Activated CD8-positive, alpha-beta memory T cell treated with anti-CD3 and anti-CD28 coated beads, Interleukin-2, amount 10 ng/mL, durations not matched to agents 7 days and 5 days (primary cell): ENCODE measurements at regions of chr6 and their contacts with region 1.

Region 1: GRCh38 chr6:11496152-11497060 is 41.1 kb upstream of the TMEM170B start:
- DNase-seq: peak; percentile 84
- ATAC-seq: peak; percentile 93
- H3K4me3 Mint-ChIP-seq: no peak overlapping the region
- H3K27ac Mint-ChIP-seq: peak overlapping the region; percentile 6
- H3K4me1 Mint-ChIP-seq: peaks cover 13% of the 10 kb centered on the region
- H3K27me3 Mint-ChIP-seq: no peaks in the 10 kb centered on the region

Region 2: GRCh38 chr6:11144393-11144851 is 352.0 kb before region 1 on chr6:
- CTCF ChIA-PET with region 1: interaction called, 111 read pairs
- DNase-seq: peak; percentile 88
- ATAC-seq: peak; percentile 97
- H3K4me3 Mint-ChIP-seq: no peak overlapping the region
- H3K27ac Mint-ChIP-seq: peak overlapping the region; percentile 13
- H3K4me1 Mint-ChIP-seq: peaks cover 5% of the 10 kb centered on the region
- H3K27me3 Mint-ChIP-seq: no peaks in the 10 kb centered on the region

Region 3: GRCh38 chr6:11224252-11224965 is 272.0 kb before region 1 on chr6:
- CTCF ChIA-PET with region 1: interaction called, 37 read pairs
- DNase-seq: peak; percentile 89
- ATAC-seq: peak; percentile 85
- H3K4me3 Mint-ChIP-seq: peak overlapping the region; percentile 59
- H3K27ac Mint-ChIP-seq: peak overlapping the region; percentile 91
- H3K4me1 Mint-ChIP-seq: peaks cover 87% of the 10 kb centered on the region
- H3K27me3 Mint-ChIP-seq: no peaks in the 10 kb centered on the region

Region 4: DNA sequence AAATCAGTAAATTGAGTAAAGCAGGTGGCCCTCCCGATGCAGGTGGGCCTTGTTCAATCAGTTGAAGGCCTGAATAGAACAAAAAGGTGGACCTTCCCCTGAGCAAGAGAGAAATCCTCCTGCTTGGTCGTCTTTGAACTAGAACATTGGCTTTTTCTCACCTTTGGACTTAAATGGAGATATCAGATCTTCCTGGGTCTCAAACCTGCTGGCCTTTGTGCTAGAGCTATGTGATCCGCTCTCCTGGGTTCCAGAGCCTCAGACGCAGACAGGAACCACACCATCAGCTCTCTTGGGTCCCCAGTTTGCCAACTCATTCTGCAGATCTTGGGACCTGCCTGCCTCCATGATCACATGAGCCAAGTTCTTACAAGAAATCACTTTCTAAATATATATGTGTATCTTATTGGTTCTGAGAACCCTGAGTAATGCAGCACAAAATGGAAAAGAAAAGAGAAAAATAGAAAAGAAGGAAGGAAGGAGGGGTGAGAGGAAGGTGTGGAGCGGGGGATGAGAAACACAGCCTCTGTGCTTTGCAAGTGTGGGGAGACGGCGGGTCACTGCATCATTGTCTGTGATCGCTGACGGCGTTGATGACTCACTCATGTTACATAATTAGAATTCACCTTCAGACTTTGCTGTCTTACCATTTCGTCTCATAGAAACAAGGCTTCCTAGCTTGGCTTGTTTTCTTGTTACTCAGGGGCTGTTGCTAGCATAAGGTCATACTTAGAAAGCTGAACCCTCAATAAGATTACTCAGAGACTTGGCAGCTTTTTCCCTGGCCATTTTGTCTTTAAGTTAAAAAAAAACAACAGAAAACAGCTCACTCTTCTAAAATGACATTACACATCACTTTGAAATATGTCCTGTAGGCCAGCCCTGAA is 178.3 kb before region 1 on chr6:
- CTCF ChIA-PET with region 1: interaction called, 11 read pairs
- DNase-seq: peak; percentile 80
- ATAC-seq: peak; percentile 91
- H3K4me3 Mint-ChIP-seq: no peak overlapping the region
- H3K27ac Mint-ChIP-seq: peak overlapping the region; percentile 74
- H3K4me1 Mint-ChIP-seq: peaks cover 54% of the 10 kb centered on the region
- H3K27me3 Mint-ChIP-seq: no peaks in the 10 kb centered on the region

Region 5: GRCh38 chr6:11467364-11467763 is 29.0 kb before region 1 on chr6:
- CTCF ChIA-PET with region 1: no interaction called
- DNase-seq: no peak
- ATAC-seq: no peak
- H3K4me3 Mint-ChIP-seq: no peak overlapping the region
- H3K27ac Mint-ChIP-seq: no peak overlapping the region
- H3K4me1 Mint-ChIP-seq: no peaks in the 10 kb centered on the region
- H3K27me3 Mint-ChIP-seq: no peaks in the 10 kb centered on the region

Region 6: DNA sequence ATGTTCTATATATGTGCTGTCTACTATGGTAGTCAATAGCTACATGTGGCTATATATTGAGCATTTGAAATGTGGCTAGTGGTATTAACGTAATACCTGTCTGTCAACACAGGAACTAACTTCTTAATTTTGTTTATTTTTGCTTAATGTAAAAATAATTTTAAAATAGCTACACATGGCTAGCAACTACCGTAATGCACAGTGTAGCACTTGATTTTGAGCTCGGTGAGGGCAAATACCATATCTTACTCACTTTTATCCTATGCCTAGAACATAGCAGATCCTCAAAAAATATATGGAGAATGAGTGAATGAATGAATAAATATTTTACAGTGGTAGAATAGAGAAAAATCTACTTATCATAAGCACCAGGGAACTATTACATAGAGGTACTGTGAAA is 13.1 kb after region 1 on chr6:
- CTCF ChIA-PET with region 1: interaction called, 13 read pairs
- DNase-seq: no peak
- ATAC-seq: no peak
- H3K4me3 Mint-ChIP-seq: no peak overlapping the region
- H3K27ac Mint-ChIP-seq: no peak overlapping the region
- H3K4me1 Mint-ChIP-seq: no peaks in the 10 kb centered on the region
- H3K27me3 Mint-ChIP-seq: peaks cover 43% of the 10 kb centered on the region